B cell (primary cell): ENCODE measurements at regions of chr12 and their contacts with region 1.

Region 1: DNA sequence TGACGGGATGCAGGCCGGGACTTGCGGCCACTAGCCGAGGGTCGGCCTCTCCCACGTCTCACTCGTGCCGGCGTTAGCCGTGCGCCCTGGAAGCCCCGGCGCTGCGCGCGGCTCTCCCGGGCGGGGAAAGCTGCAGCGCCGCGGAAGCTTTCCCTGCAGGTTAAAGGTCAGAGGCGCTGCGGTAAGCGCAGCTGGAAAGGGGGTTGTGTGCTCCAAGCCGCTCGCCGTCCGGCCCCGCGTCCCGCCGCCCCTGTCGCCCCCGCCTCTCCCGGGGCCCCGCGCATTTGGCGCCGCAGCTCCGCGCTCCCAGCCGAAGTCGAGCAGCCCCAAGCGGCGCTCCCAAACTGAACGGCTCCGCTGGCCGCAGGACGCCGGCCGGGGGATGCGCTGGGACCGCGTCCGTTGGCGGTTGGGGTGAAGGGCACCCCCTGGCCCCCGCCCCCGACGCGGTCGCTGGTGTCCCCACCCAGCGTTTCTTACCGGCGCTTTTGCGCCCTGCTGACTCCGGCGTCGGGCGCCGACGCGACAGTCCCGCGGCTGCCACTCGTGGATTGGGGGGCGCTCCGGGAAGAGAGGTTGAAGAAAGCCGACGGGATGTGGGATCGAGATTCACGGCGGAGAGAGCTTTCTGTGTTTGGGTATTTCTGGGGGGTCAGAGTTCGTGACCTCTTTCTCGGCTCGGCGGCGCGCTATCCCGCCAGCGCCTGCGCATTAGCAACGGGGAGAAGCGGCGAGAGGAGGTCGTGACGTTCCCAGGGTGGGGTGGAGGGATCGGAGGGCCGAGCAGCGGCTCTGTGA is at the start of gene NR2C1:
- DNase-seq: peak; percentile 96
- ATAC-seq: peak; percentile 99
- H3K4me3 ChIP-seq: peak within 1 kb of the TSS; percentile 69 to 94 (median 88)
- H3K4me3 Mint-ChIP-seq: peak within 1 kb of the TSS; percentile 97
- H3K27ac ChIP-seq: peak within 1 kb of the TSS; percentile 65 to 84
- H3K27ac Mint-ChIP-seq: peak within 1 kb of the TSS; percentile 91
- H3K4me1 ChIP-seq: peaks cover 0 to 14% of the 10 kb centered on the region in 2 donors
- H3K4me1 Mint-ChIP-seq: peaks cover 11% of the 10 kb centered on the region
- H3K27me3 ChIP-seq: no peaks in the 10 kb centered on the region
- H3K27me3 Mint-ChIP-seq: no peaks in the 10 kb centered on the region
- CTCF ChIP-seq: no peak
- total RNA-seq, gene NR2C1: 53.9 and 55.4 TPM in 2 replicates

Region 2: DNA sequence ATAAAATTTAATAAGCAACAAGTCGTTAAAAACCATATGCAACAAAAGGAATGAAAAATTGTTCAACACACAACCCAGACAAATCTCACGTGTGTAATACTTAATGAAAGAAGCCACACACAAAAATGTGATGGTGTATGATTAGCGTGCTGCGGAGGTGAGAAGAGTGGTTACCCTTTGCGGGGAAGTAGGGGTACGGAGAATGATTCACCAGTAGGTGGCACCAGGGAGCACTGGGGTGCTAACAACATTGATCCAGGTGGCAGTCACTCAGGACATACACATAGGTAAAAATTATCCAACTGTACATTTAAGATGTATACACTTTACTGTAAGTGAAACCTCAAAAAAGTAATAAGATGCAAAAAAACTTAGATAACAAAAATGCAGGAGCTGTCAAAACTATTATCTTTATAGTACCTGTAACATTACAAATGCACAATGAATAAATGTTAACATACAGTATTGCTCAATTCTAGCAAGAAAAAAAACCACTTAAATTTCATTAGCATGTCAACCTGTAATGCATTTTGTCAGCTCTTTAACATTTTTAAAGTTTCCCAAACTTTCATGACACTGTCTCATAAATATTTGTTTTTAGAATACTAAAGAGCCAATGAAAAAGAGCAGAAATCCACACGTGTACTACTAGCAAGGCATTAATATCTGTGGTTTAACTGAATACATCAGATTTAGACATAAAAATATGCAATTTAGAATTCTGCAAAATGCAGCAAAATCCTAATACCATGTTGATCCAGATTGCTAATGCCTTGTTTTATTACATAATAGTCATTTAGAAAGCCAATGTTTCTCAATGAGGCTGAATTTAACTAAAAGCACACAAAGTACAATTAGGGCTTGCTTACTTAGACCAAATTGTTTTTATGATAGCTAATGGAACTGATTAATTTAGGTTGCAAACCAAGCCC is 469.4 kb before region 1 on chr12:
- CTCF ChIA-PET with region 1: no interaction called
- POLR2A ChIA-PET with region 1: no interaction called
- intact Hi-C with region 1: loop called (anchors 10 kb)
- DNase-seq: peak; percentile 68
- ATAC-seq: peak; percentile 70
- H3K4me3 ChIP-seq: no peak overlapping the region
- H3K4me3 Mint-ChIP-seq: no peak overlapping the region
- H3K27ac ChIP-seq: no peak overlapping the region
- H3K27ac Mint-ChIP-seq: no peak overlapping the region
- H3K4me1 ChIP-seq: no peaks in the 10 kb centered on the region
- H3K4me1 Mint-ChIP-seq: no peaks in the 10 kb centered on the region
- H3K27me3 ChIP-seq: no peaks in the 10 kb centered on the region
- H3K27me3 Mint-ChIP-seq: no peaks in the 10 kb centered on the region
- CTCF ChIP-seq: peak; percentile 77

Region 3: GRCh38 chr12:94817695-94818075 is 255.4 kb before region 1 on chr12:
- CTCF ChIA-PET with region 1: interaction called, 9 read pairs
- POLR2A ChIA-PET with region 1: no interaction called
- intact Hi-C with region 1: loop called (anchors 1 kb)
- DNase-seq: no peak
- ATAC-seq: no peak
- H3K4me3 ChIP-seq: peak overlapping the region; percentile 39 to 66 (median 51)
- H3K4me3 Mint-ChIP-seq: peak overlapping the region; percentile 83
- H3K27ac ChIP-seq: peak overlapping the region; percentile 86 to 90
- H3K27ac Mint-ChIP-seq: peak overlapping the region; percentile 95
- H3K4me1 ChIP-seq: peaks cover 60 to 62% of the 10 kb centered on the region in 2 donors
- H3K4me1 Mint-ChIP-seq: peaks cover 61% of the 10 kb centered on the region
- H3K27me3 ChIP-seq: no peaks in the 10 kb centered on the region
- H3K27me3 Mint-ChIP-seq: no peaks in the 10 kb centered on the region
- CTCF ChIP-seq: no peak

Region 4: DNA sequence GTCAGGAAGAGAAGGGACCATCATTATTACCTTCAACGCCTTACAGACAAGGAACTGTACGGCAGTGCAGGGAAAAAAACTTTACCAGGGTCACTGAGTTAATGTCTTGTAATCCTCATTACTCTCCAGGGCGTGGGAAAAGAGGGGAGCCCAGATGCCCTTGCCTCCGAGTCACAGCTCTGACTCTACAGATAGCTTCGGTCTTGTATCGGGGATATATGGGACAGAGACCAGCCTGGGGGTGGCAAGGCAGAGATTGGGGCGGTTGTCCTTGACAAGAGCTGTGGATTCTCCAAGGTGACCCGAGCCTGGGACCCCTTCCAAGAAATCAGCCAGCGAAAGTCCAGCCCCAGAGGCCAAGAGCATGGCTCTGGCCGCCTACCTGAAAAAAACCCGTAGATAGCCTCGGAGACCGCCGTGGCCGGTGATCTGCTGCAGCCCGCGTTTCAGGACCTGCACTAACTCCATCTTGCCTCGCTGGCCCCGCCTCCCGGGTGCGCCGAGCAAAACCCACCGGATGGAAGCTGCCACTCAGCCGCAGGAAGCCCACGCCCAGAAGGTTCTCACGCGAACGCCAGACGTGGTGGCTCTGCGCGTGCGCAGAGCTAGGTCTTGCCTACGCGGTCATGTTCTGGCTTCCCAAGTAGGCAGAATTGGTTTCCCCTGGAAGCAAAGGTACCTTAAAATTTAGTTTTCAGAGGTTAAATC is 69.7 kb before region 1 on chr12 and contains the start of gene NDUFA12:
- CTCF ChIA-PET with region 1: interaction called, 11 read pairs
- POLR2A ChIA-PET with region 1: no interaction called
- intact Hi-C with region 1: loop called (anchors 1 kb)
- DNase-seq: peak; percentile 96
- ATAC-seq: peak; percentile 100
- H3K4me3 ChIP-seq: peak within 1 kb of the TSS; percentile 75 to 98 (median 81)
- H3K4me3 Mint-ChIP-seq: peak within 1 kb of the TSS; percentile 98
- H3K27ac ChIP-seq: peak within 1 kb of the TSS; percentile 82
- H3K27ac Mint-ChIP-seq: peak within 1 kb of the TSS; percentile 98
- H3K4me1 ChIP-seq: peaks cover 15 to 24% of the 10 kb centered on the region in 2 donors
- H3K4me1 Mint-ChIP-seq: peaks cover 38% of the 10 kb centered on the region
- H3K27me3 ChIP-seq: no peaks in the 10 kb centered on the region
- H3K27me3 Mint-ChIP-seq: no peaks in the 10 kb centered on the region
- CTCF ChIP-seq: no peak
- total RNA-seq, gene NDUFA12: 41.7 and 42.0 TPM in 2 replicates

Region 5: DNA sequence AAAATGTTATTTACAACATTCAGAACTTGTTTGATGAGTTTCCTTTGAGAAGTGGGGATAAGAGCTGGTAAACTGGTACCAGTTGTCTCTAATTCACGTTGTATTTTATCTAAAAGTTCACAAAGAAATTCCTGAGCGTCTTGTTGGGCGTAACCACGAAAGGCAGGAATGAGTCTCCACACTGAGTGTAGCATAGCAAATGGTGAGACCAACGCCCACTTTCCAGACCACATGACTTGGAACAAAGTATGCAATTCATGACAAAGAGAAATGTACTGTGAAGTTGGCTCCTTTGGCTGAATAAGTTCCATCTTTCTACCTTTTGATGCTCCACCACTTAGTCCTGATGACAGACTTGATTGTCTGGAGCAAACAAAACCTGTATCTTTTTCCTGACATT is 459.8 kb after region 1 on chr12:
- CTCF ChIA-PET with region 1: interaction called, 5 read pairs
- POLR2A ChIA-PET with region 1: no interaction called
- intact Hi-C with region 1: loop called (anchors 5 kb)
- DNase-seq: no peak
- ATAC-seq: no peak
- H3K4me3 ChIP-seq: no peak overlapping the region
- H3K4me3 Mint-ChIP-seq: no peak overlapping the region
- H3K27ac ChIP-seq: no peak overlapping the region
- H3K27ac Mint-ChIP-seq: no peak overlapping the region
- H3K4me1 ChIP-seq: no peaks in the 10 kb centered on the region
- H3K4me1 Mint-ChIP-seq: peaks cover 1% of the 10 kb centered on the region
- H3K27me3 ChIP-seq: no peaks in the 10 kb centered on the region
- H3K27me3 Mint-ChIP-seq: no peaks in the 10 kb centered on the region
- CTCF ChIP-seq: no peak